PC-9 (cell line): ENCODE measurements at regions of chr9 and their contacts with region 1.

Region 1: GRCh38 chr9:108645520-108645919 is 210.3 kb downstream of the ACTL7B start:
- DNase-seq: no peak
- H3K4me3 ChIP-seq: no peak overlapping the region
- H3K27ac ChIP-seq: no peak overlapping the region
- H3K4me1 ChIP-seq: 0 out of 2 replicates have a peak, but pooled peaks cover 4% of the 10 kb centered on the region
- H3K27me3 ChIP-seq: no peaks in the 10 kb centered on the region
- CTCF ChIP-seq: no peak

Region 2: GRCh38 chr9:108478431-108478837 is 167.1 kb before region 1 on chr9:
- CTCF ChIA-PET with region 1: no interaction called
- POLR2A ChIA-PET with region 1: no interaction called
- intact Hi-C with region 1: no loop called
- DNase-seq: peak; percentile 57 to 93
- H3K4me3 ChIP-seq: no peak overlapping the region
- H3K27ac ChIP-seq: peak overlapping the region; percentile 87
- H3K4me1 ChIP-seq: peaks cover 48% of the 10 kb centered on the region
- H3K27me3 ChIP-seq: no peaks in the 10 kb centered on the region
- CTCF ChIP-seq: no peak

Region 3: DNA sequence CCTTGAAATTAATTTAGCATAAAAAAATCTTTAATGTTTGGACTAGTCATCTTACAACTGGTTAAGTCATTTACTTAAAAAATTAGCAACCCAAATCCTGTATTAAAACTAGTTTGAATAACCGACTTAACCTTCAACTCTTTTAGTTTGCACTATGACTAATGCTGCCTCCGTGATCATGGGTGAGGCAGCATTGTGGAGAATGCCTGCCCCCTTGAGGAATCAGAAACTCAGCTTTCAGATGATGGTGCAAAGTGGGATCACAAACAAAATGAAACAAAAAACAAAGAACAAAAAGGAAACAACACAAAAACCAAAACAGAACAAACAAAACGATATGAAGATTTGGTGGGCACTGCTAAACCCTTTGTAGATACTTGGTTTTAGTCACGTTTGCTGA is 1007.4 kb after region 1 on chr9:
- CTCF ChIA-PET with region 1: no interaction called
- POLR2A ChIA-PET with region 1: interaction called, 10 read pairs
- intact Hi-C with region 1: no loop called
- DNase-seq: peak; percentile 43 to 59
- H3K4me3 ChIP-seq: no peak overlapping the region
- H3K27ac ChIP-seq: no peak overlapping the region
- H3K4me1 ChIP-seq: peaks cover 18% of the 10 kb centered on the region
- H3K27me3 ChIP-seq: no peaks in the 10 kb centered on the region
- CTCF ChIP-seq: peak; percentile 68